PC-9 (cell line): ENCODE measurements at regions of chr1 and their contacts with region 1.

Region 1: GRCh38 chr1:121418369-121419049 is 233.7 kb downstream of the SRGAP2C start:
- DNase-seq: peak in 1 of 2 experiments; percentile 28
- H3K4me3 ChIP-seq: no peak overlapping the region
- H3K27ac ChIP-seq: no peak overlapping the region
- H3K4me1 ChIP-seq: peaks cover 20% of the 10 kb centered on the region
- H3K27me3 ChIP-seq: no peaks in the 10 kb centered on the region
- CTCF ChIP-seq: no peak

Region 2: DNA sequence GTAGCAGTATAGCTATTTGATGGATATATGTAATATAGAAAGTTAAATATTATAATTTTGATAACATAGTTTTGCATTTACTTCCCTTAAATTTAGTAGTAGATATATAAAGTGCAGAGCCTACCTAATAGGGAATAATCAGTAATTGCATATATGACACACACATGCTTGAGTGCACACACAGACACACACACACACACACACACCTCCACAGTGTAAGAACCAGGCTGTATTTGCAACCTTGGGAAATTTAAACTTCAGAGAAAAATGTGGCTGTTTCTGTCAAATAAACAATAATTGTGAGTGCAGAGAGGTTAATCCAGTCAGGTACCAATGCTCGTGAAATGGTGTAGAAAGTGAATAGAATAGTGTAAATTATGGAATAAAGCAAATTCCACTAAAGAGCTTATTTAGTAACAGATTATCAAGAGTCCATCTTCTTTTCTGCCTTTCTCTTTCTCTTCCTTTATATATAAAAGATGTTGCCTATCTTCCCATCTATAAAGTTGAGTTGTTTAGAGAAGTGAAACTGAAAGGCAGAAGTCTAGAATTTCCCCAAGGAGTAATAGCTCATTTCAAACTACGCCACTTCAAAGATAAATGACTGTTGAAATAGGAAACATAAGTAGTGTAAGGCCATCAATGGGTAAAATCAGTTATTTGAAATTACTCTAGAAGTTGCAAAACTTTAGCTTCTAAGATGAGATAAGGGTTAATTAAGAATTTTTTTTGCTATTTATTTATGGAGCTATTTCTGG is 40.0 kb after region 1 on chr1:
- CTCF ChIA-PET with region 1: no interaction called
- POLR2A ChIA-PET with region 1: no interaction called
- intact Hi-C with region 1: loop called (anchors 10 kb)
- DNase-seq: no peak
- H3K4me3 ChIP-seq: no peak overlapping the region
- H3K27ac ChIP-seq: no peak overlapping the region
- H3K4me1 ChIP-seq: no peaks in the 10 kb centered on the region
- H3K27me3 ChIP-seq: no peaks in the 10 kb centered on the region
- CTCF ChIP-seq: no peak

Region 3: GRCh38 chr1:121483961-121484424 is 65.5 kb after region 1 on chr1:
- CTCF ChIA-PET with region 1: no interaction called
- POLR2A ChIA-PET with region 1: no interaction called
- intact Hi-C with region 1: no loop called
- DNase-seq: no peak
- H3K4me3 ChIP-seq: no peak overlapping the region
- H3K27ac ChIP-seq: peak overlapping the region; percentile 59
- H3K4me1 ChIP-seq: peaks cover 10% of the 10 kb centered on the region
- H3K27me3 ChIP-seq: no peaks in the 10 kb centered on the region
- CTCF ChIP-seq: no peak

Region 4: GRCh38 chr1:121519042-121519755 is 100.7 kb after region 1 on chr1:
- CTCF ChIA-PET with region 1: no interaction called
- POLR2A ChIA-PET with region 1: no interaction called
- intact Hi-C with region 1: loop called (anchors 10 kb)
- DNase-seq: peak; percentile 57 to 74
- H3K4me3 ChIP-seq: peak overlapping the region; percentile 90
- H3K27ac ChIP-seq: no peak overlapping the region
- H3K4me1 ChIP-seq: peaks cover 11% of the 10 kb centered on the region; the same call in 1 of the 2 replicates
- H3K27me3 ChIP-seq: no peaks in the 10 kb centered on the region
- CTCF ChIP-seq: no peak

Region 5: DNA sequence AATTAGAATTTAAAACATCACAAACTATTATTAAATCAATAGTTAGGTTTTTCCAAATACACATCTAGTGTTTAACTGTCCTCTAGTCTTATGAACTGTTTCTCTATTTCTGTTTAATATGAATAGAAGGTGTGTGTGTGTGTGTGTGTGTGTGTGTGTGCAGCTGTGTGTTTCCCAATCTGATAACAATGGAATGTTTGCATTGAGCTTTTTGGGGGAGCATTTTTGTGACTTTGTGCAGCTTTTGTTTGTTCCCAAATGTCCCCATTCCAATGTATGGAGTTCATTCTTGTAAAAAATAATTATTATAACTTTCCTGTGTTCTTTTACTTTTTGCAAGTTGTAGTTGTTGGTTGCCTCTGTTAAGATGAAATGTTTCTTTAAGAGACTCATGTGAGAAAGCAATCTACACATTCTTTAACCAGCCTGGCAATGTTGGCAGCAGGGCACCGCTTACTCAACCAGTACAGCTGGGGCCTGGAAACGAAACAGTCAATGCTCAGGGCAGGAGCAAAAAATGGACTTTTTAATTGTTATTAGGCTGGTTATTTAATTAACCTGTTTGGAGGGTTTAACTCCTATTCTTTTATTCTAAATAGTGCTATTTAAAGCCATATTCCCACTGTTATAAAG is 120.5 kb after region 1 on chr1:
- CTCF ChIA-PET with region 1: no interaction called
- POLR2A ChIA-PET with region 1: no interaction called
- intact Hi-C with region 1: no loop called
- DNase-seq: no peak
- H3K4me3 ChIP-seq: no peak overlapping the region
- H3K27ac ChIP-seq: no peak overlapping the region
- H3K4me1 ChIP-seq: no peaks in the 10 kb centered on the region
- H3K27me3 ChIP-seq: no peaks in the 10 kb centered on the region
- CTCF ChIP-seq: no peak

Region 6: DNA sequence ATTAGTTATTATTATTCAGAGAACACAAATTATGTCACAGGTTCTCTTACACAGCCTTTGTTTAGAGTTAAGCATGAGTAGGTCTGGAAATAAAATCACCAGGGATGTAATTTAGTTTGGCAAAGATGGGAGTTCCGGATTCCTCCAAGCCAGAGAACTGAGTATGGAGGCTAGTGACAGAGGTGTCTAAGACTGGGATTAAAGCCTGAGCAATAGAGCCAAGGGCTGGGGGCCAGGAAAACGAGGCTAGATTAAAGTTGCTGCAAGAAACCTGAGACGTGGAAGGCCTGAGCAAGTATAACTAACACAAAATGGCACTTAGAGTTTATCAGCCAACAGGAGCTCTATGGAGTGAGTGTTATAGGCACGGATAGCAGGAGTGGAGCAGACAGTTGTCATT is 147.8 kb after region 1 on chr1:
- CTCF ChIA-PET with region 1: no interaction called
- POLR2A ChIA-PET with region 1: no interaction called
- intact Hi-C with region 1: loop called (anchors 10 kb)
- DNase-seq: no peak
- H3K4me3 ChIP-seq: no peak overlapping the region
- H3K27ac ChIP-seq: no peak overlapping the region
- H3K4me1 ChIP-seq: no peaks in the 10 kb centered on the region
- H3K27me3 ChIP-seq: no peaks in the 10 kb centered on the region
- CTCF ChIP-seq: no peak